Right ventricle myocardium inferior (tissue), 1 donor: ENCODE measurements at regions of chr7 and their contacts with region 1.

Region 1: DNA sequence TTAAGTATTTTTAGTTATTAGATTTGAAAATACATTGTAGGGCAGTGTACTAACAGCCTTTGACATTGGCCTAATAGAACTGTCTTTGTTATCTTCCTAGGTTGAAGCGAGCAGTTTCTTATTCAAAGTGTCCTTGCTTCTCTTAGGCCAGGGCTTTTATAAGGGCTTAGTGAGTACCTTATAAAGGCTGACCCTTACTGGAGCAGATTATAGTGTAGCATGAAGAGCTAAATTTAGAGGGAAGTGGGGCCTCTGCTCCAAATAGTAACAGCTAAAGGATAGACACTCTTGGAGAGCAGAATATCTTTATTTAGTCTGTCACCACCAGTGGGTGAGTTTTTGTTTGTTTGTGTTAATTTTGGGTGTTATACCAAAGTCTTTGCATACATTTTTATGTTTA is 15.9 kb downstream of the BZW2 start:
- DNase-seq: no peak
- ATAC-seq: peak; percentile 89

Region 2: GRCh38 chr7:16645593-16646471 is 16.1 kb before region 1 on chr7 and contains the starts of genes ANKMY2 and BZW2:
- intact Hi-C with region 1: loop called (anchors 2 kb)
- DNase-seq: peak; percentile 98
- ATAC-seq: peak; percentile 97
- total RNA-seq, gene ANKMY2: 21.9 TPM
- total RNA-seq, gene BZW2: 369 TPM